Panc1 (cell line): ENCODE measurements at regions of chr21 and their contacts with region 1.

Region 1: DNA sequence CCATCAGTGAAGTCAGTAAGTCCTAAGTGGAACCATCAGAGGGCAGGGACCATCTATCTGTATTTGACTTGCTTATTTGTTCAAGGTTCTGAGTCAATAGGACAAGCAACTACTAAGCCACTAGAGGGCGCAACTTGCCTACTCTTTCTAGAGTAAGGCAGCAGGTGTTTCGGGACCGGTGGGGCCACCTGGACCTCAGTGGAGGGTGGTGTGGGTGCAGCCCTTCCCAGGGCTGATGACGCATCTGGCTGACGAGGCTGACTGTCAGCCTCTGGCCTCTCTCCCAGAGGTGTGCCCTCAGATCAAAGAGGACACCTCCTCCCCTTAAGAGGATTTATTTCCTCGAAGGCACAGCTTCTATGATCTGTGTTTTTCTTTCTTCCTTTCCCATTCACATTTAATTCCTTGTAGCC is 6.6 kb downstream of the CBR3 start:
- DNase-seq: no peak
- ATAC-seq: peak; percentile 95
- H3K4me3 ChIP-seq: no peak overlapping the region
- H3K27ac ChIP-seq: no peak overlapping the region
- H3K4me1 ChIP-seq: no peaks in the 10 kb centered on the region
- H3K27me3 ChIP-seq: no peaks in the 10 kb centered on the region
- CTCF ChIP-seq: peak; percentile 83

Region 2: DNA sequence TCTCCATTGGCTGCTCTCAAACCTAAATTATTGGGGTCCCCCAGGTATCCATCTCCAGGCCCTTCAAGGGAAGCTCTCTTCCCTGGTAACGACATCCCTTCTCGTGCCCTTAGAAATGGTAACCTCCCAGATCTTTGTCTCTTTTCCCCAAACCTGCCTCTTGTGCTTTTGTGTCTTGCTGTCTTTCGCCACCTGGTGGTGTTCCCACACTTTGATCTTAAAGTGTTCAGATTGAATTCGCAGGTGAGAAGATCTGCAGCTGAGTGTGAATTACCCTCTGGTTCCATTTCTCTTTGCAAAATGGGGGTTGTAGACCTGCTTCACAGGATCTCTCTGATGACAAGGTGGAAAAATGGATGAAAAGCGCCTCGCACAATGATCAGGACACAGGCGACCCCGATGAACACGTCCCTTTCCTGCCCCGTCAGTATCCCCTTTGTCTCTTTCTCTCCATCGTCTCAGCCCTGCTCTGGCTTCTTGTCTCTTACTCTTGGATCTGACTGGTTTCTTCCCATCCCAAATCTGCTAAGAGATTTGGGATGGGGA is 68.2 kb after region 1 on chr21:
- CTCF ChIA-PET with region 1: no interaction called
- POLR2A ChIA-PET with region 1: interaction called, 4 read pairs
- in situ Hi-C with region 1: no loop called
- intact Hi-C with region 1: loop called (anchors 1 kb)
- DNase-seq: peak; percentile 58
- ATAC-seq: peak; percentile 76
- H3K4me3 ChIP-seq: peak overlapping the region in 1 of 2 experiments; percentile 24; a peak in 2 of 4 replicates
- H3K27ac ChIP-seq: peak overlapping the region; percentile 78
- H3K4me1 ChIP-seq: peaks cover 19% of the 10 kb centered on the region
- H3K27me3 ChIP-seq: no peaks in the 10 kb centered on the region
- CTCF ChIP-seq: peak; percentile 76

Region 3: DNA sequence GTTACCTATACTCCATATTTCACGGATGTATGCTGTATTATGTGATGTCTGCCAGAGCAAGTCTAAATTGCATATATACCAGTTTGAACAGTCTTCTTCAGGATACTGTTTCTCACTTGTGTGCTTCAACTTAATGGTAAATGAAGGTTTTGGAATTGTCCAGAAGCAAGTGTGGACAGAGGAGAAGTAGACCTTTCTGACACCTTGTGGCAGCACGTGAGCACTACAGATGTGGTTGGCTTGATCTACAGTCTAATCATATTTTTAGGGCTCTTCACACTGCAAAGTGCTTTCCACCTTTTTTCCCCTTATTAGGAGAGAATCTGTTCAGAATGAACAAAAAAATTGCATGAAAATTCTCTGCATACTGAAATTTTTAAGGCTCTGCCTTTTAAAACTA is 189.4 kb after region 1 on chr21:
- CTCF ChIA-PET with region 1: interaction called, 6 read pairs
- POLR2A ChIA-PET with region 1: interaction called, 3 read pairs
- in situ Hi-C with region 1: no loop called
- intact Hi-C with region 1: loop called (anchors 5 kb)
- DNase-seq: no peak
- ATAC-seq: peak; percentile 89
- H3K4me3 ChIP-seq: no peak overlapping the region
- H3K27ac ChIP-seq: no peak overlapping the region
- H3K4me1 ChIP-seq: peaks cover 6% of the 10 kb centered on the region; the same call in 1 of the 2 replicates
- H3K27me3 ChIP-seq: no peaks in the 10 kb centered on the region
- CTCF ChIP-seq: peak; percentile 67; the same call in 1 of the 2 replicates